CD8-positive, alpha-beta T cell (primary cell): ENCODE measurements at regions of chr14 and their contacts with region 1.

Region 1: DNA sequence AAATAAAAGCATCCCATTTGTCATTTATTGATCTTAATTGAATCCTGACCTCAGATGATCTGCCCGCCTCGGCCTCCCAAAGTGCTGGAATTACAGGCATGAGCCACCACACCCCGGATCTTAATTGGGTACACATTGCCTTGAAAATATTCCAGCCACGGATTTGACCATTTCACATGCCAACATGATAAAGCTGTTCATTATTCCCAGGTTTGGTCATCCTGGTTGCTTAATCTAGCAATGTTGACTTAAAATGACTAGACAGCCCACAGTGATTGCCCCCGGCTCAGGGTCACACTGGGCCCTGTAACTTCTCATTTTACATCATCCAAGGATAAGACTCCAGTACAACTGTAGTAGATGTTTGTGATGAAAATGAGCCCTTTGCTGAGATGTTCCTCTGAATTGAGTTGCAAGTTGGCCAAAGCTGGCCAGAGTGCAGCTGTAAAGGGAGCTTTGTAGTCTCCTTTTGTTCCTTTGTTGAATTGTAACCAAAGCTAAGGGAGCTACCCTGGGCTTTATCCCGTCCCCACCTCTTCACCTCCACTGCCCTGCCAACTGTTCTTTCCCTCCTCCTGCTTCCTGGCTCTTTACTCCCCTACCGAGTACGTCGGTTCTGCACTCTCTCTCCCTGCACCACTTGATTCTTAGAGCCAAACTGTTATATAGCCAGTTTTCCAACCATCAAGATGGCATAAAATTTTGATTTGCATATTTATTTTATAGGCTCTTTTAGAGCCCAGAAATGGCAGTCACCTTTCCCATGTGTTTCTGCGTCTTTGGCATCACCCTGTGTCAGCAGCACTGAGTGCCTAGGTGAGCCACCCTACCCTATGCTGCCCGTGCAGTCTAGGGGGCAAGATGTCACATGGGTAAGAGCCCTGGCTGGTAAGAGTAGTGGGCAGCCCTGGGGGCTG is 141.3 kb upstream of the HIF1A start:
- DNase-seq: no peak
- ATAC-seq: no peak
- H3K4me3 ChIP-seq: no peak overlapping the region
- H3K4me3 Mint-ChIP-seq: no peak overlapping the region
- H3K27ac ChIP-seq: no peak overlapping the region
- H3K27ac Mint-ChIP-seq: peak overlapping the region; percentile 90
- H3K4me1 ChIP-seq: peaks cover 13% of the 10 kb centered on the region
- H3K4me1 Mint-ChIP-seq: peaks cover 47% of the 10 kb centered on the region
- H3K27me3 ChIP-seq: no peaks in the 10 kb centered on the region
- H3K27me3 Mint-ChIP-seq: no peaks in the 10 kb centered on the region
- CTCF ChIP-seq: no peak

Region 2: DNA sequence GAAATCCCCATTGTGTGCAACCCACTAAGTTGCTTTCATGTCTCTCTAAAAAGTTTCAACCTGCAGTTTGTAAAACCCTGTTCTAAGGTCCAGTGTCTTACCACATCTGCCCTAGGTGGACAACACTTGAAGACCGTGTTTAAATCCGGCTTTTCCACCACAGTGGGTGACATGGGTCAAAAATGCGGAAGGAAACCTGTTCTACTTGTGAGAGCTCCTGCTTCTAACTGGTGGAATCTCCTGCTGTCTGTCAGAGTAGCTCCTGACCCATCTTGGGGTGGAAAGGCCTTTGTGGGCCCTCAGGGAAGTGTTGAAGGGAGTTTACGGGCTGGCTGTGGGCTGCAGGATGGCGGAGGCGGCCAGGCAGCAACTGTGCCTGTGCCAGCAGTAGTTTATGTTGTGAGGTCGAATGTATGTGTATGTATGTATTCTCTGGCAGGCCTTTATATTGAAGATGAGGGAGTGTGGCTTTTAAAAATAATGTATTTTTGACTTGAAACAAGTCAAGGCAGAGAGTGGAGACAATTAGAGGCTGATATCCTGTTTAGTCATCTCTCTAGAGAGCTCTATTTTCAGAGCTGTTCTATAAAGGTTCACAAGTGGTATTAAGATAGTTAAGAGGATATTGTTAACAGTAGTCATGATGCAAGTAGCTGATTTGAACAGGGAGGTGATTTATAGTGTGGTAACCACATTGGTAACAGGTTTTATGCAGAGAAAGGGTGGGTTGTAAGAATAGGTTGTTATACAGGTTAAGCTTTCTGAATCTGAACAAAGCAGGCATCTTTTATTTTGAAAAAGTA is 165.6 kb before region 1 on chr14:
- CTCF ChIA-PET with region 1: no interaction called
- POLR2A ChIA-PET with region 1: no interaction called
- intact Hi-C with region 1: no loop called
- DNase-seq: peak in 4 of 9 experiments; percentile 43 to 81 (median 54)
- ATAC-seq: peak; percentile 69
- H3K4me3 ChIP-seq: peak overlapping the region; percentile 32 to 46
- H3K4me3 Mint-ChIP-seq: no peak overlapping the region
- H3K27ac ChIP-seq: peak overlapping the region; percentile 53 to 90
- H3K27ac Mint-ChIP-seq: no peak overlapping the region
- H3K4me1 ChIP-seq: peaks cover 98% of the 10 kb centered on the region
- H3K4me1 Mint-ChIP-seq: no peaks in the 10 kb centered on the region
- H3K27me3 ChIP-seq: no peaks in the 10 kb centered on the region
- H3K27me3 Mint-ChIP-seq: no peaks in the 10 kb centered on the region
- CTCF ChIP-seq: no peak

Region 3: GRCh38 chr14:61537563-61538463 is 16.2 kb before region 1 on chr14:
- CTCF ChIA-PET with region 1: interaction called, 4 read pairs
- POLR2A ChIA-PET with region 1: no interaction called
- intact Hi-C with region 1: loop called in 1 of 2 experiments (anchors 2 kb)
- DNase-seq: peak in 4 of 9 experiments; percentile 31 to 46 (median 40)
- ATAC-seq: peak; percentile 48
- H3K4me3 ChIP-seq: no peak overlapping the region
- H3K4me3 Mint-ChIP-seq: no peak overlapping the region
- H3K27ac ChIP-seq: peak overlapping the region in 1 of 2 experiments; percentile 44
- H3K27ac Mint-ChIP-seq: peak overlapping the region; percentile 87
- H3K4me1 ChIP-seq: no peaks in the 10 kb centered on the region
- H3K4me1 Mint-ChIP-seq: peaks cover 51% of the 10 kb centered on the region
- H3K27me3 ChIP-seq: no peaks in the 10 kb centered on the region
- H3K27me3 Mint-ChIP-seq: no peaks in the 10 kb centered on the region
- CTCF ChIP-seq: no peak

Region 4: GRCh38 chr14:61678975-61679374 is 125.0 kb after region 1 on chr14:
- CTCF ChIA-PET with region 1: no interaction called
- POLR2A ChIA-PET with region 1: no interaction called
- intact Hi-C with region 1: no loop called
- DNase-seq: no peak
- ATAC-seq: no peak
- H3K4me3 ChIP-seq: no peak overlapping the region
- H3K4me3 Mint-ChIP-seq: no peak overlapping the region
- H3K27ac ChIP-seq: no peak overlapping the region
- H3K27ac Mint-ChIP-seq: no peak overlapping the region
- H3K4me1 ChIP-seq: peaks cover 8% of the 10 kb centered on the region
- H3K4me1 Mint-ChIP-seq: peaks cover 7% of the 10 kb centered on the region
- H3K27me3 ChIP-seq: no peaks in the 10 kb centered on the region
- H3K27me3 Mint-ChIP-seq: no peaks in the 10 kb centered on the region
- CTCF ChIP-seq: no peak

Region 5: GRCh38 chr14:61719344-61720293 is 165.6 kb after region 1 on chr14:
- CTCF ChIA-PET with region 1: no interaction called
- POLR2A ChIA-PET with region 1: no interaction called
- intact Hi-C with region 1: loop called in 1 of 2 experiments (anchors 5 kb)
- DNase-seq: peak in 3 of 9 experiments; percentile 10 to 66 (median 47)
- ATAC-seq: peak; percentile 84
- H3K4me3 ChIP-seq: no peak overlapping the region
- H3K4me3 Mint-ChIP-seq: peak overlapping the region; percentile 46
- H3K27ac ChIP-seq: peak overlapping the region in 1 of 2 experiments; percentile 27
- H3K27ac Mint-ChIP-seq: peak overlapping the region; percentile 88
- H3K4me1 ChIP-seq: peaks cover 47% of the 10 kb centered on the region
- H3K4me1 Mint-ChIP-seq: peaks cover 68% of the 10 kb centered on the region
- H3K27me3 ChIP-seq: no peaks in the 10 kb centered on the region
- H3K27me3 Mint-ChIP-seq: no peaks in the 10 kb centered on the region
- CTCF ChIP-seq: no peak

Region 6: GRCh38 chr14:61730756-61731373 is 176.9 kb after region 1 on chr14:
- CTCF ChIA-PET with region 1: interaction called, 3 read pairs
- POLR2A ChIA-PET with region 1: no interaction called
- intact Hi-C with region 1: loop called in 1 of 2 experiments (anchors 5 kb)
- DNase-seq: peak in 3 of 9 experiments; percentile 19 to 58 (median 51)
- ATAC-seq: no peak
- H3K4me3 ChIP-seq: no peak overlapping the region
- H3K4me3 Mint-ChIP-seq: no peak overlapping the region
- H3K27ac ChIP-seq: no peak overlapping the region
- H3K27ac Mint-ChIP-seq: peak overlapping the region; percentile 42
- H3K4me1 ChIP-seq: peaks cover 3% of the 10 kb centered on the region
- H3K4me1 Mint-ChIP-seq: peaks cover 20% of the 10 kb centered on the region
- H3K27me3 ChIP-seq: no peaks in the 10 kb centered on the region
- H3K27me3 Mint-ChIP-seq: no peaks in the 10 kb centered on the region
- CTCF ChIP-seq: peak; percentile 73